Tibial artery (tissue), 4 donors: ENCODE measurements at regions of chr1 and their contacts with region 1.

Region 1: GRCh38 chr1:114282751-114283403 is 129.2 kb upstream of the SYT6 start:
- DNase-seq: peak; percentile 89 to 92
- H3K4me3 ChIP-seq: no peak overlapping the region
- H3K27ac ChIP-seq: no peak overlapping the region
- H3K4me1 ChIP-seq: no peaks in the 10 kb centered on the region
- H3K27me3 ChIP-seq: no peaks in the 10 kb centered on the region
- CTCF ChIP-seq: peak; percentile 81 to 84

Region 2: DNA sequence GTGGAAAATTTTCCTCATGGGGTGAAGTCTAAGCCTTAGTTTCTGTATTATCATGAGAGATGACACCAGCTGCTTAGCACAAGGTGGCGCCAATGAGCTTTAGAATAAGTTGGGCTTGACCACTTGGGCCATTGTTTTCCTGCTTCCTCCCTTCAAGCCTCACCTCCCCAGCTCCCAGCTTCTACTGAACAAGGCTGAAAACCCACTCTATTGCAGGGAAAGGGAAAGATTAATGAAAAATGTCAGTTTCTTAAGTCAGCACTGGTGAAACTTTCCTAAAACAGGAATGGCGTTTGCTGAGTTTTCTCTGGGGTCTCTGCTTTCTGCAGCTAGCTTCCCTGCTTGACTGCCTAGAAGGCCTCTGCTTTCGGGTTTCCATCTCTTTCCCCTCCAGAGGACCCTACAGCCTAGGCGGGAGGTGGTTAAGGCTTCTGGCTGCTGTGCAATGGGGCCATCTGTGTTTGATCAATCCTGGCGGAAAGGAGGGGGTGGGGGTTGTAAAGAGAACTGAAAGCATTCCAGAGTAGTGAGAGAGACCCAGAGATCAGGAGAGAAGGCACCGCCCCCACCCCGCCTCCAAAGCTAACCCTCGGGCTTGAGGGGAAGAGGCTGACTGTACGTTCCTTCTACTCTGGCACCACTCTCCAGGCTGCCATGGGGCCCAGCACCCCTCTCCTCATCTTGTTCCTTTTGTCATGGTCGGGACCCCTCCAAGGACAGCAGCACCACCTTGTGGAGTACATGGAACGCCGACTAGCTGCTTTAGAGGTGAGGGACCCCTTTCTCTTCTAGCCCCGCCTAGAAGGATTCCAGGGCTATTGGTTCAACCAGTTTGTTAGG is 303.8 kb before region 1 on chr1 and contains the start of gene OLFML3:
- intact Hi-C with region 1: loop called (anchors 5 kb)
- DNase-seq: peak; percentile 91 to 94
- H3K4me3 ChIP-seq: peak within 1 kb of the TSS; percentile 39 to 46
- H3K27ac ChIP-seq: peak within 1 kb of the TSS; percentile 79 to 84
- H3K4me1 ChIP-seq: peaks cover 11 to 81% (median 51%) of the 10 kb centered on the region in 4 donors
- H3K27me3 ChIP-seq: no peaks in the 10 kb centered on the region
- CTCF ChIP-seq: peak; percentile 61 to 77